Gastrocnemius medialis (tissue), 4 donors: ENCODE measurements at regions of chr5 and their contacts with region 1.

Region 1: DNA sequence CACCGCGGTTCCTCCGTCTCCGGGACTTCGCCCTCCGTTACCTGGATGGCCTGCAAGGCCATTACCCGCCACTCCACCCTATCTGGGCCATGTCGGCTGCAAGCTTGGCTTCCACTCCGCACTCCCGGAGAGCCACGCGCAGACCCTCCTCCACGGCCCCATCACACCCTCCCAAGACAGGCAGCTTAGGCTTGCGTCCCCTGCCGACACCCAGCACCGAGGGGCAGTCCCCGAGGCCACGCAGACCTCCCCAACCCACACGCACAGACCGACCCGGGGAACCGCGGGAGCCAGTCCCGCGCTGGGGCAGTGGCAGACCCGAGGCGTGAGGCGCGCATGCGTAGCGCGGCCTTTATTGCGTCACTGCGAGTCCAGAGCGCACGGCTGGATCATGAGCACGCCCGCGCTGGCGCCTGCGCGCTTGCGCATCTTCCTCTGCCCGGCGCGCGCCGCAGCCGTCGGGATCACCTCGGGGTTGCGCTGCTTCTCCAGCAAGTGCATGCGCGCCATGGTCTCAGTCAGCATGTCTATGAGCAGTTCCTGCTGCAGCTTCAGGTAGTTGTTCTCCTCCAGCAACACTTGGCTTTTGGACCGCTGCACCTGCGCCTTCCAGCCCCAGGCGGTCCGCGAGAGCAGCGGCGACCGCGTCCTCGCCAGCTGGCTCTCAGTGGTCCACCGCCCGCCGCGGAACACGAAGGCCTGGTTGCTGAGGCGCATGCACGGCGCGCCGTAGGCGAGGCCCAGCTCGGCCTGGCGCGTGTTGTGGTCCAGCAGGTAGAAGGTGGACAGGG is 2.4 kb downstream of the CBY3 start:
- DNase-seq: peak; percentile 89 to 94
- ATAC-seq: peak; percentile 96 to 97
- H3K4me3 ChIP-seq: peak overlapping the region; percentile 77 to 100 (median 84)
- H3K27ac ChIP-seq: peak overlapping the region; percentile 88 to 99 (median 92)
- H3K4me1 ChIP-seq: peaks cover 9 to 12% of the 10 kb centered on the region in 2 donors
- H3K27me3 ChIP-seq: no peaks in the 10 kb centered on the region
- CTCF ChIP-seq: peak in 2 of 5 experiments; percentile 21 to 25
- POLR2A ChIP-seq: peak; percentile 76 to 77

Region 2: DNA sequence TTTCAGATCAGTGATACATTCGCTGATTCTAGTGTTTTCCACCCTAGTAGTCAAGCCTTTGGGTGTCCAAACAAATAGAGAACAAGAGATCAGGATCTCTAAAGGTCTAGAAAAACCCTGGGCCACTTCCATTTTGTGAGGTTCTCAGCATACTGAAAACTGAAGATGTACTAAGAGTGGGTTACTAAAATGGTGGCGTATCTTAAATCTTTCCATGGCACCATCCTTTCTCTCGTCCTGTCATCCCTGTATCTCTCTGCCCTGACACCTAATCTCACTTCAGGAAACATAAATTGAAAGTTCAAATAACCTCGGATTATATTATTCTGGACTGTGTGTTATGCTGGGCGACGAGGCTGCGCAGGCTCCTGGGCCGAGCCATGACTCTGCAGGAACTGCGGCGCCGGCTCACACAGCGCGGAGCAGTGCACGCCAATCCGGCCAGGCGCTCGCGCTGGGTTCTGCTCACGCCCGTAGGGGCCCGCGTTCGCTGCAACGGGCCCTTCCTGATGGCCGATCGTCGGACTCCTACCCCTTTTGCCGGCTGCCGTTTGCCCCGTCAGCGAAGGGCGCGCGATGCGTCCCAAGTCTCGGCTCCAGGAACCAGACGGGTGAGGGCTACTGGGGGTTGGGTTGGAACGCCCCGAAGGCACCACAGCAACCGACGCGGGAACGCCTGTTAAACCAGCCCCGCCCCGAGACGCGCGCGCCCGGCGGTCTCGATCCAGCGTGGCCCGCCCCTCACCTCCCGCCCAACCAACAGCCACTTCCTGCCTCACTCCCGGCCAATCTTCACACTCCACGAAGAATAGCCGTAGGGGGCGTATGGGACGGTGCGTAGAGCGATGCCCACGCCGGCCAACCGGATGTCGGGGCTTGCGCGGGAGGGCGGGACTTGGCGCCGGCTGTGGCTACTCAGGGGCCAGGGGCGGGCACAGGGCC is 19.8 kb after region 1 on chr5:
- in situ Hi-C with region 1: no loop called
- intact Hi-C with region 1: loop called (anchors 1 kb)
- DNase-seq: peak; percentile 99 to 100
- ATAC-seq: peak; percentile 90 to 96
- H3K4me3 ChIP-seq: peak overlapping the region; percentile 83 to 99 (median 88)
- H3K27ac ChIP-seq: peak overlapping the region; percentile 93 to 100 (median 98)
- H3K4me1 ChIP-seq: peaks cover 21 to 28% of the 10 kb centered on the region in 2 donors
- H3K27me3 ChIP-seq: no peaks in the 10 kb centered on the region
- CTCF ChIP-seq: no peak
- POLR2A ChIP-seq: peak; percentile 90 to 91

Region 3: GRCh38 chr5:180071531-180072255 is 393.3 kb after region 1 on chr5 and contains the start of gene RNF130:
- in situ Hi-C with region 1: no loop called
- intact Hi-C with region 1: loop called (anchors 2 kb)
- DNase-seq: peak; percentile 89 to 92
- ATAC-seq: peak; percentile 85 to 87
- H3K4me3 ChIP-seq: peak within 1 kb of the TSS; percentile 75 to 98 (median 84)
- H3K27ac ChIP-seq: peak within 1 kb of the TSS; percentile 91 to 98 (median 98)
- H3K4me1 ChIP-seq: peaks cover 9 to 32% of the 10 kb centered on the region in 2 donors
- H3K27me3 ChIP-seq: no peaks in the 10 kb centered on the region
- CTCF ChIP-seq: no peak
- POLR2A ChIP-seq: peak; percentile 58 to 67
- total RNA-seq, gene RNF130: 34.5 to 79.5 (median 55.6) TPM